MCF 10A (cell line): ENCODE measurements at regions of chr19 and their contacts with region 1.

Region 1: GRCh38 chr19:54023191-54023590 is 31.8 kb downstream of the CACNG6 start:
- DNase-seq: no peak
- H3K4me3 Mint-ChIP-seq: no peak overlapping the region
- H3K27ac Mint-ChIP-seq: no peak overlapping the region
- H3K4me1 Mint-ChIP-seq: peaks cover 10% of the 10 kb centered on the region
- H3K27me3 Mint-ChIP-seq: no peaks in the 10 kb centered on the region
- CTCF ChIP-seq: no peak

Region 2: DNA sequence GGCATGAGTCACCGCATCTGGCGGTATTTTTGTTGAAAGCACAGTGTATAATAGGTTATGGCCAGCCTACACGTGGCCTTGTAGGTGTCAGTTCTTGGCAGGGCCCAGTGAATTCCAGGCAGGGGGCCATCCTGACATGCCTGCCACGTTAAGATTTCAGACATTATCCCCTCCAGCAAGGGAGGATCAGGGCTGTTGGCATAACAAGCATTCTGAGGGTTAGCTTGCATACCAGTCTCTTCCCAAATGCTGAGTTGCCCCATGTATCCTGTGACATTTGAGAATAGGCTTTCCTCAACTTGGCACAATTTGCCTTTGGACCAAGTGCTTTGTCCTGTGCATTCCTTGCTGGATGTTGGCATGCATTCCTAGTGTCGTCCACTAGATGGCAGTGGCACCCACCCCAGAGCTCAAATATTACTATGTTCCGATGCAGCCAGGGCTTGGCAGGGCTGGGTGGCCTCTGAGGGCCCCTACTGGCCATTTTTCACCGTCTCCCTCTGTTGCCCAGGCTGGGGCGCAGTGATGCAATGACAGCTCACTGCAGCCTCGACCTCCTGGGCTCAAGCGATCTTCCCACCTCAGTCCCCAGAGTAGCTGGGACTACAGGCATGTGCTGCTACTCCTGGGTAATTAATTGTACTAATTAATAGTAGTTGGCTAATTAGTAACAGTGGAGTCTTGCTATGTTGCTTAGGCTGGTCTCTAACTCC is 230.3 kb before region 1 on chr19:
- CTCF ChIA-PET with region 1: interaction called, 146 read pairs
- POLR2A ChIA-PET with region 1: no interaction called
- intact Hi-C with region 1: loop called (anchors 1 kb)
- DNase-seq: peak; percentile 86
- H3K4me3 Mint-ChIP-seq: no peak overlapping the region
- H3K27ac Mint-ChIP-seq: no peak overlapping the region
- H3K4me1 Mint-ChIP-seq: no peaks in the 10 kb centered on the region
- H3K27me3 Mint-ChIP-seq: no peaks in the 10 kb centered on the region
- CTCF ChIP-seq: peak; percentile 91

Region 3: DNA sequence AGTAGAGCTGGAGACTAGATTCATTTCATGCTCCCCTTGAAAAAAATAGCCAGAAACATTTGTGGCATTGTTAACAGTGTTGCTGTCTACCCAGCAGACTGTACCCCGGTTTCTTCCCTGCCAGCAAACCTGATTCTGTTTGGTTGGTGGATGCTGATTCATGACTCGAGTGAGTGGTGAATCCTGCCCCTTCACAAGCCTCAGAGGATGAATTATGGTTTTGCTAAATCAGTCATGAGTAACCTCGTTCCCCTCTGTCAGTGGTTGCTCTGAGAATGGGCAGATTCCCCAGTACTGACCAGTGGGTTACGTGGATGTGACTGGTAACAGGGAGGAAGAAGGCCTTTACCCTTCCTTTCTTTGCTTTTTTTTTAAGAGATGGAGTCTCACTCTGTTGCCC is 209.2 kb before region 1 on chr19:
- CTCF ChIA-PET with region 1: interaction called, 89 read pairs
- POLR2A ChIA-PET with region 1: no interaction called
- intact Hi-C with region 1: loop called (anchors 5 kb)
- DNase-seq: no peak
- H3K4me3 Mint-ChIP-seq: no peak overlapping the region
- H3K27ac Mint-ChIP-seq: no peak overlapping the region
- H3K4me1 Mint-ChIP-seq: no peaks in the 10 kb centered on the region
- H3K27me3 Mint-ChIP-seq: no peaks in the 10 kb centered on the region
- CTCF ChIP-seq: no peak

Region 4: GRCh38 chr19:53849237-53849676 is 173.9 kb before region 1 on chr19:
- CTCF ChIA-PET with region 1: interaction called, 38 read pairs
- POLR2A ChIA-PET with region 1: interaction called, 4 read pairs
- intact Hi-C with region 1: no loop called
- DNase-seq: no peak
- H3K4me3 Mint-ChIP-seq: no peak overlapping the region
- H3K27ac Mint-ChIP-seq: no peak overlapping the region
- H3K4me1 Mint-ChIP-seq: peaks cover 5% of the 10 kb centered on the region
- H3K27me3 Mint-ChIP-seq: no peaks in the 10 kb centered on the region
- CTCF ChIP-seq: no peak

Region 5: GRCh38 chr19:53906211-53907192 is 116.7 kb before region 1 on chr19:
- CTCF ChIA-PET with region 1: interaction called, 7 read pairs
- POLR2A ChIA-PET with region 1: no interaction called
- intact Hi-C with region 1: loop called (anchors 1 kb)
- DNase-seq: peak; percentile 29
- H3K4me3 Mint-ChIP-seq: peak overlapping the region; percentile 28
- H3K27ac Mint-ChIP-seq: no peak overlapping the region
- H3K4me1 Mint-ChIP-seq: peaks cover 7% of the 10 kb centered on the region
- H3K27me3 Mint-ChIP-seq: peaks cover 79% of the 10 kb centered on the region
- CTCF ChIP-seq: peak; percentile 92

Region 6: GRCh38 chr19:53982611-53983010 is 40.6 kb before region 1 on chr19:
- CTCF ChIA-PET with region 1: no interaction called
- POLR2A ChIA-PET with region 1: no interaction called
- intact Hi-C with region 1: no loop called
- DNase-seq: no peak
- H3K4me3 Mint-ChIP-seq: no peak overlapping the region
- H3K27ac Mint-ChIP-seq: no peak overlapping the region
- H3K4me1 Mint-ChIP-seq: peaks cover 20% of the 10 kb centered on the region
- H3K27me3 Mint-ChIP-seq: peaks cover 16% of the 10 kb centered on the region
- CTCF ChIP-seq: no peak

Region 7: DNA sequence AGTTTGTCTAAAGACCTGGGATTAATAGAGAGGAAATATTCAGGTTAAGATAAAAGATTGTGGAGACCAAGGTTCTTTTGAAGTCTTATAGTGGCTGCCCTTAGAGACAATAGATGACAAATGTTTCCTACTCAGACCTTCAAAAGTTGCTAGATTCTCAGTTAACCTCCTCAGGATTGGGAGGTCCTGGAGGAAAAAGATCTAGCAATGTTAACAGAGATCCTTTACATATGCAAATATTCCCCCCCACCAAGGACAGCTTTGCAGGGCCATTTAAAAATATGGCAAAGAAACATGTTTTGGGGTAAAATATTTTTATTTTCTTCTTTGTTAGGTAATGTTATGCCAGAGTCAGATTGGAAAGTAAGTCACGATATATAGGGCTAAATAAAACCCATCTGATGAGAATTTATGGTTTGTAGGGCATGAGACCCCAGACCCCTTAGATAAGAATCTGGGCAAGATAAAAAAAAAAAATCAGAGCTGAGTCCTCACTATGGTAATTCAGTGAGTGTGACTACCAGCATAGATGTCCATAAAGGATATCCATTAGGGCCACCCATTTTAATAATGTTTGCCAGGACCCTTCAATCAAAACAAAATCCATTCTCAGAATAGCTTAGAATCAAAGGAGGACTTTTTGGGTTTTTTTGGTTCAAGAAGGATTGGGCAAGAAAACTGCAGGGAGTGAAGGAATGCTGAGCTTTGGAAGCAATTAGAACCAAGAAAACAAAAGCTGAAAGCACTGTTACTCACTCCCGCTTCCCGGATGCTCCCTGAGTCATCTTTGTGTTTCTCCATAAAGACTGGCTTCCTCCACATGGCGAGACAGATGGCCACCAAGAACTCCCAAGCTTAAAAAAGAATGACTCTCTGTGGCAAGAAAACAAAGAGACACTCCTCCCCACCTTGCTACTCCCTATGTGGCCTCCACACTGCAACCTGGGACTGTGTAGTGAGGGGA is 12.3 kb after region 1 on chr19:
- CTCF ChIA-PET with region 1: interaction called, 22 read pairs
- POLR2A ChIA-PET with region 1: no interaction called
- intact Hi-C with region 1: no loop called
- DNase-seq: peak; percentile 94
- H3K4me3 Mint-ChIP-seq: no peak overlapping the region
- H3K27ac Mint-ChIP-seq: peak overlapping the region; percentile 23
- H3K4me1 Mint-ChIP-seq: peaks cover 11% of the 10 kb centered on the region
- H3K27me3 Mint-ChIP-seq: no peaks in the 10 kb centered on the region
- CTCF ChIP-seq: no peak

Region 8: GRCh38 chr19:54209811-54210494 is 186.8 kb after region 1 on chr19:
- CTCF ChIA-PET with region 1: no interaction called
- POLR2A ChIA-PET with region 1: no interaction called
- intact Hi-C with region 1: no loop called
- DNase-seq: peak; percentile 100
- H3K4me3 Mint-ChIP-seq: peak overlapping the region; percentile 55
- H3K27ac Mint-ChIP-seq: peak overlapping the region; percentile 87
- H3K4me1 Mint-ChIP-seq: peaks cover 39% of the 10 kb centered on the region
- H3K27me3 Mint-ChIP-seq: no peaks in the 10 kb centered on the region
- CTCF ChIP-seq: no peak

Region 9: GRCh38 chr19:54231077-54231931 is 208.1 kb after region 1 on chr19:
- CTCF ChIA-PET with region 1: no interaction called
- POLR2A ChIA-PET with region 1: no interaction called
- intact Hi-C with region 1: no loop called
- DNase-seq: peak; percentile 89
- H3K4me3 Mint-ChIP-seq: no peak overlapping the region
- H3K27ac Mint-ChIP-seq: no peak overlapping the region
- H3K4me1 Mint-ChIP-seq: no peaks in the 10 kb centered on the region
- H3K27me3 Mint-ChIP-seq: peaks cover 28% of the 10 kb centered on the region
- CTCF ChIP-seq: peak; percentile 97

Region 10: GRCh38 chr19:54448774-54449700 is 425.8 kb after region 1 on chr19 and contains the start of gene LENG8:
- CTCF ChIA-PET with region 1: no interaction called
- POLR2A ChIA-PET with region 1: no interaction called
- intact Hi-C with region 1: no loop called
- DNase-seq: peak; percentile 97
- H3K4me3 Mint-ChIP-seq: peak within 1 kb of the TSS; percentile 97
- H3K27ac Mint-ChIP-seq: peak within 1 kb of the TSS; percentile 99
- H3K4me1 Mint-ChIP-seq: peaks cover 28% of the 10 kb centered on the region
- H3K27me3 Mint-ChIP-seq: no peaks in the 10 kb centered on the region
- CTCF ChIP-seq: no peak
- total RNA-seq, gene LENG8: 238 and 249 TPM in 2 replicates